Activated naive CD4-positive, alpha-beta T cell treated with anti-CD3 and anti-CD28 coated beads for 36 hours (primary cell): ENCODE measurements at regions of chr6 and their contacts with region 1.

Region 1: GRCh38 chr6:90251295-90251992 is 45.2 kb downstream of the BACH2 start:
- DNase-seq: no peak
- H3K4me3 Mint-ChIP-seq: peak overlapping the region; percentile 8
- H3K27ac Mint-ChIP-seq: peak overlapping the region; percentile 98
- H3K4me1 Mint-ChIP-seq: peaks cover 90% of the 10 kb centered on the region
- H3K27me3 Mint-ChIP-seq: no peaks in the 10 kb centered on the region

Region 2: DNA sequence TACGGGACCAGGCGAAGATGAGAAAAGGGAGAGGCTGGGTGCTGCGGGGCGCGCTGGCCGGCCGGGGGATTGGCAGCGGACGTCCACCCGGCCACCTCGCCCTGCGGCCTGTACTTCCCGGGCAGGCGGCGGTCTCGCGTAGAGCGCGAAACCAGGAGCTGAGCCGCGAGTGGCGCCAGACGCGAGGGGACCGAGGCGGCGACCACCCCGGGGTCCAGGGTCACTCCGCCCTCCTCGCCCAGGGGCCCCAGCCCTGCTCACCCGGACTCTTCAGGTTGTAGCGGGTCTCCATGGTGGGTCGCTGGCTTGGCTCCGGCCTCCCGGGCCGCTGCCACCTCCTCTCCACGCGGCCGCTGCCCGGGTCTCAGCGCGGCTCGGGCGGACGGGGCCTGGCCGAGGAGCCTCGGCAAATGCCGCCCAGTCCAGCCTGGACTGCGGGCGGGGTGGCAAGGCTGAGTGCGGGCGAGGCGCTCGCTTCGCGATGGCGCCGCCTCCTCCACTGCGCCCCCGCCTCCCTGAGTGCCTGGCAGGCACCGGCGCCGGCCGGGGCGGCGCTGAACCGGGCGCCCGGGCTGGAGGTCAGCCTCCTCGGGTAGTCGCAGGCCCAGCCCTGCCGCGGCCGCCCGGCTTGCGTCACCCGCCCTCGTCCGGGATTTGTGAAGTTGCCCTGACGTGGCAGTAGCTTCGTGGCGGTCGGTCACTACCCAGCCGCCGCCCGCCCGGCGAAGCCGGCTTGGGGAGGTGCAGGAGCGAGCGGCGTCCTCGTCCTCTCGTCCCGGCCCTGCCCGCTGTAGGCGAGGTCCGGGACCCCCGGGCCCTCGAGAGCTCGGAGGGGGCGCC is 898.9 kb before region 1 on chr6 and contains the start of gene UBE2J1:
- CTCF ChIA-PET with region 1: no interaction called
- intact Hi-C with region 1: loop called (anchors 10 kb)
- DNase-seq: peak; percentile 71
- H3K4me3 Mint-ChIP-seq: peak within 1 kb of the TSS; percentile 90
- H3K27ac Mint-ChIP-seq: peak within 1 kb of the TSS; percentile 84
- H3K4me1 Mint-ChIP-seq: peaks cover 66% of the 10 kb centered on the region
- H3K27me3 Mint-ChIP-seq: no peaks in the 10 kb centered on the region
- total RNA-seq, gene UBE2J1: 10.8 to 10.9 TPM

Region 3: GRCh38 chr6:90121982-90122381 is 129.5 kb before region 1 on chr6:
- CTCF ChIA-PET with region 1: no interaction called
- intact Hi-C with region 1: loop called (anchors 1 kb)
- DNase-seq: peak; percentile 82
- H3K4me3 Mint-ChIP-seq: no peak overlapping the region
- H3K27ac Mint-ChIP-seq: peak overlapping the region; percentile 88
- H3K4me1 Mint-ChIP-seq: peaks cover 89% of the 10 kb centered on the region
- H3K27me3 Mint-ChIP-seq: no peaks in the 10 kb centered on the region

Region 4: GRCh38 chr6:90216072-90216977 is 35.1 kb before region 1 on chr6:
- CTCF ChIA-PET with region 1: interaction called, 4 read pairs
- intact Hi-C with region 1: loop called (anchors 1 kb)
- DNase-seq: peak; percentile 76
- H3K4me3 Mint-ChIP-seq: peak overlapping the region; percentile 14
- H3K27ac Mint-ChIP-seq: no peak overlapping the region
- H3K4me1 Mint-ChIP-seq: peaks cover 32% of the 10 kb centered on the region
- H3K27me3 Mint-ChIP-seq: no peaks in the 10 kb centered on the region

Region 5: DNA sequence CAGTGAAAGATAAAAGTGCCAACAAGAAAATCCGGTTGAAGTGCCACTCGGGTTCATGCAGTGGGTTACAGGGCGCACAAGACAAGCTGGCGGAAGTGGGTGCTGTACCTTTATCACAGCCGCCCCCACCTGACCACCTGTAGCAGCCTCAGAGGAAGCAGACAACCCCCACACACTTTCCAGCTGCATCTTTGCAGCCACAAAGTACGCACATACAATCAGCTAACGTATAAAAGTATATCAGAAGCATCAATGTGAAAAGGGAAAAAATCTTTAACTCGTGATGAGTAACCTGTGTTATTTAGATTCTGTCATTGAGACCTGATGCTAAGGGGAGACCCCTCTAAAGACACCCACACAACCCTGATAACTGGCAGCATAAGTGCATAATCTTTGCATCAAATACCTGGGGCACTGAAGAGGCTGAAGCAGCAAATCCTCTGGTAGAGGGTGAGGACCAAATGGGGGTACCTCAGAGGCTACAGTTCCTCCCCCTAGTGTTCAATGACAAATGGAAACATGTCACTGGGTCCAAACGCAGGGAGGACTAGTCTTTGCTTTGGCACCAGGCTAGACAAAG is 23.1 kb after region 1 on chr6:
- CTCF ChIA-PET with region 1: interaction called, 7 read pairs
- intact Hi-C with region 1: loop called (anchors 1 kb)
- DNase-seq: peak; percentile 96
- H3K4me3 Mint-ChIP-seq: peak overlapping the region; percentile 36
- H3K27ac Mint-ChIP-seq: peak overlapping the region; percentile 97
- H3K4me1 Mint-ChIP-seq: peaks cover 91% of the 10 kb centered on the region
- H3K27me3 Mint-ChIP-seq: no peaks in the 10 kb centered on the region

Region 6: DNA sequence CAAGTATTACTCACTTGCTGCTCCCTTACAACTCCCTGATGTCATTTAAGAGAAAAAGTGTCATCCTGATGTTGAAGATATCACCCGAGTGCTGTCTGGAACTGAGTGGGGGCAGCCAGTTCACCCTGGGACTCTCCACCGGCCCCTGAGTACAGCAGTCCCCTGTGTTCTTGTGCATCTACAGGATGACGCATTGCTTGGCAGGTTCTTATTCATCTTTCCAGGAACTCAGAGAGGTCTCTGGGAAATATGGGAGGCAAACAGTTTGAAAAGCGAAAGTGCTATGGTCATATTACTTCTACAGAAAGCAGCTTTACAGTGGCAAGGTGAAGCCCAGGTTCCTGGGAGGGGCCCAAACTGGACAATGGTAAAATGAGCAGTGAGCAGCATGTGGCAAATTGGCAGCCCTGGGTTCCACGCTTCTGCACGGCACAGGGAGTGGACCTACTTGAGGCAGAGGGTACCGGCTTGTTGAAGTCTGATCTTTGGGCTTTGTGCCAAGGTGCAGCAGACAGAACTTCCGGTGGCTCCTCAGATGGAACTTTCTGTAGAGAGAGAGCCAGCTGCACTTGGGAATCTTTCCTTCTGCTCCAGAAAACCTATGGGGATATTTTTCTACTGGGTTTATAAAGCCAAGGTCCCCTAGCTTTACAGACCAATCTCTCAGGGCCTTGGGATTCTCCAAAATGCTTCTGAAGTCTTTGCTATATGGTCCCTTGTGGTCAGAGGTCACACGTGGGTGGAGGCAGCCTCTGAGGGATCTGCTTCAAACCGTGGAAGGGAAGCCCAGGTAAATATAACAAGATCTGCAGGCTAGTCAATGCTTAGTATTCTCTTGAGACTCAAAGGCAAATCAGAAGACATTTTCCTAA is 207.1 kb after region 1 on chr6:
- CTCF ChIA-PET with region 1: no interaction called
- intact Hi-C with region 1: loop called (anchors 1 kb)
- DNase-seq: peak; percentile 95
- H3K4me3 Mint-ChIP-seq: peak overlapping the region; percentile 66
- H3K27ac Mint-ChIP-seq: peak overlapping the region; percentile 99
- H3K4me1 Mint-ChIP-seq: peaks cover 89% of the 10 kb centered on the region
- H3K27me3 Mint-ChIP-seq: no peaks in the 10 kb centered on the region